GM10248 (cell line): ENCODE measurements at regions of chr16 and their contacts with region 1.

Region 1: DNA sequence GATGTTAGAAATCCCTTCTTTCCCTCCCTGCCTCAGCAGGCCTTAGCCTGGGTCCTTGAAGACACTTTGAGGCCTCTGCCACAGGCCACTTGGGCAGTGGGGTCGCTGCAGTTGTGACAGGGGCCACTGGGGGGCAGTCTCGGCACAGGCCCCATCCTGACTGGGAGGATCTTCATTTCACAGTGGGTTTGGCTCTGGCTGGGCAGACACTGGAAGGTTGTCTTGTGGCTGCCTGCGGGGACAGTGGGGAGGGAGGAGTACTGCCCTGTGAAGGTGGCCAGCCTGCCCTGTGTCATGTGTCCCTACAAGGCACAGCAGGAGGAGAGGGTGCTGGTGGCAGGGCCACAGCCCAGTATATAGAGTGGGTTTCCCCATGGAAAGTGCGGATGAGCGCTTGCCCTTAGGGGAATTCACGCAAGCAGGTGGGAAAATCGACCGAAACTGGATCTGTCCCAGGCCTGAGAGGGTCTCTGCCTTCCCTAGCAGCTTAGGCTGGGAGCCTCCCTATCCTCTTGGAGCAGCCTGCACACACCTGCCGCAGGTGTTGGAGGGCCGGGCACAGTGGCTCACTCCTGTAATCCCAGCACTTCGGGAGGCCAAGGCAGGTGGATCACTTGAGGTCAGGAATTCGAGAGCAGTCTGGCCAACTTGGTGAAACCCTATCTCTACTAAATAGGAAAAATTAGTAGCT is 28.8 kb downstream of the GINS2 start:
- DNase-seq: peak; percentile 86
- CTCF ChIP-seq: peak; percentile 94

Region 2: GRCh38 chr16:85420501-85421337 is 239.2 kb before region 1 on chr16:
- CTCF ChIA-PET with region 1: no interaction called
- POLR2A ChIA-PET with region 1: no interaction called
- DNase-seq: peak; percentile 91
- CTCF ChIP-seq: peak; percentile 100

Region 3: GRCh38 chr16:85675251-85675927 is 15.4 kb after region 1 on chr16:
- CTCF ChIA-PET with region 1: interaction called, 28 read pairs
- POLR2A ChIA-PET with region 1: no interaction called
- DNase-seq: no peak
- CTCF ChIP-seq: peak; percentile 37

Region 4: DNA sequence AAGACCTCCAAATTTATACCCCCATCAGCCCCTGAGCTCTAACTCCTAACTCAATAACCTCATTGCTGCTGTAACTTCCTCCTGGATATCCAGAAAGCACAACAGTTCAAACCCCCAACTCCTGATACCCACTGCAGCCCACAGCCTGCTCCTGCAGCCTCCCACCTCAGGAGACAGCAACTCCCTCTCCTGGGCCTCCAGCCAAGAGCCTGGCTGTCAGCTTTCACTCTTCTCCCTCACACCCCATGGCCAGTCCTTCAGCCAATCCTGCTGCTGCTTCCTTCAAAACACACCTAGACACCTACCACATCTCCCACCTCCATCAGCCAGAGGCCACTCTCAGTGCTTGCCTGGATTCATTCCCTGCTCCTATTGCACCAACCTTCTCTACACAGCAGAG is 23.4 kb after region 1 on chr16:
- CTCF ChIA-PET with region 1: interaction called, 11 read pairs
- POLR2A ChIA-PET with region 1: no interaction called
- DNase-seq: no peak
- CTCF ChIP-seq: no peak

Region 5: GRCh38 chr16:85759631-85760419 is 99.9 kb after region 1 on chr16:
- CTCF ChIA-PET with region 1: interaction called, 33 read pairs
- POLR2A ChIA-PET with region 1: no interaction called
- DNase-seq: peak; percentile 73
- CTCF ChIP-seq: peak; percentile 88

Region 6: GRCh38 chr16:85781695-85782370 is 121.9 kb after region 1 on chr16:
- CTCF ChIA-PET with region 1: no interaction called
- POLR2A ChIA-PET with region 1: no interaction called
- DNase-seq: no peak
- CTCF ChIP-seq: no peak